A549 (cell line): ENCODE measurements at regions of chr2 and their contacts with region 1.

Region 1: DNA sequence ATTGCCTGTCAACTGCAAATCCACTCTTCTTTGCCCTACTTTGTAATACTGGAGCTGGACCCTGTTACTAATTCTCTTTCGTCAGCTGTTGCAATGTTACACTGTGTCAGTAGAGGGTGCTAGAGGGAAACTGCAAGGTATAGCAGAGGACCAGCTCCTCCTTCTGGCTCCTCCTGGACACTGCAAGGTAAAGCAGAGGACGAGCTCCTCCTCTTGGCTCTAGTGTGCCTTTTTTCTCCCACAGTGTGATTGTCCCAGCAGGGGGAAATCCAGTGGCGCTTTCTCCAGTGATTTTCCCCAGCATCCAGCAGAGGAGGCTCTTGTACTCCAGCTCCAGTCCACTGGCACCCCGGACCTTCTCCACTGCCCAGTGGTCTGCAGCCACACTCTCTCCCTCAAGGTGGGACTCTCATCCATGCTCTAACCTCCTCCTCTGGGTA is 95.6 kb downstream of the CAPN13 start:
- DNase-seq: peak; percentile 80 to 94
- ATAC-seq: peak; percentile 66 to 87
- H3K4me3 ChIP-seq: no peak overlapping the region
- H3K27ac ChIP-seq: no peak overlapping the region
- H3K4me1 ChIP-seq: no peaks in the 10 kb centered on the region
- CTCF ChIP-seq: peak; percentile 100
- EP300 ChIP-seq: no peak
- POLR2A ChIP-seq: no peak
- RAD21 ChIP-seq: peak; percentile 91 to 99

Region 2: DNA sequence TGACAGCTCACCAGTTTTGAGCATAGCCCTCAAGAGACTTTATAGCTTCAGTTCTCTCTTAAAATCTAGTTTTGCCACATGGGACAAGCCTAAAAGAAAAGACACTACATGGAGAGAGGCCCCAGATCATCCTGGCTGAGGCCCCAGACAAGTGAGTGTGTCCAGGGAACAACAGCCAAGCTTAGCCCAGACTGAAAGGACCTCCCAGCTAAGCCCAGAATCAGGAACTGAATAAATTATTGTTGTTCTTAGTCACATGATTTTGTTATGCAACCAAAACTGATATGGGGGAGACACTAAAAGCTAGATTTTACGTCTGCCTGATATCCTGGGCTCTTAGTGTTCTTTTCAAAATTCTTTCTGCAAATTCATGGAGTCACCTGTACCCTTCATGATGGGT is 509.7 kb before region 1 on chr2:
- CTCF ChIA-PET with region 1: interaction called, 430 read pairs
- POLR2A ChIA-PET with region 1: no interaction called
- DNase-seq: no peak
- ATAC-seq: no peak
- H3K4me3 ChIP-seq: no peak overlapping the region
- H3K27ac ChIP-seq: no peak overlapping the region
- H3K4me1 ChIP-seq: no peaks in the 10 kb centered on the region
- CTCF ChIP-seq: no peak
- EP300 ChIP-seq: no peak
- POLR2A ChIP-seq: no peak
- RAD21 ChIP-seq: no peak

Region 3: DNA sequence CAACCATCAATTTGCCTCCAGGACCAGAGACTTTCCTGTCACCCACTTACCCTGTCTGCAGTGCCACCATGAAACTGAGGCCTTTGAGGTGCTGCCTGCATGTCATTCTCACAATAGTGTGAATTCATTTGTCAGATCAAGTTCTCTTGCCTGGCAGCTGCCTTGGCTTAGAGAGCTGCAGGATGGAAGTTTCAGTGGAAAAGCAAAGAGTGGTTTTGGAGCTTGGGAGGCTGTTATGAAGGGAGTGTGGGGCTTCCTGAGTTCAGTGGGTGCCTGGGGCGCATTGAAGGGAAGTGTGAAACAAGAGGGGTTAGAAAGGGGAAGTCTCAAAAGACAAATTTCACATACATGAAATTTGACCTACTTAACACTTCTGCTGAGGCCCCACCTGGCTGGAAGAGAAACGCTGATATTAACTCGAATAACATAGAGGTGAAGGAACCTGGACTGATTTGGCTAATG is 488.2 kb before region 1 on chr2:
- CTCF ChIA-PET with region 1: interaction called, 39 read pairs
- POLR2A ChIA-PET with region 1: no interaction called
- DNase-seq: no peak
- ATAC-seq: no peak
- H3K4me3 ChIP-seq: no peak overlapping the region
- H3K27ac ChIP-seq: no peak overlapping the region
- H3K4me1 ChIP-seq: no peaks in the 10 kb centered on the region
- CTCF ChIP-seq: no peak
- EP300 ChIP-seq: no peak
- POLR2A ChIP-seq: no peak
- RAD21 ChIP-seq: no peak

Region 4: GRCh38 chr2:30686000-30686399 is 25.7 kb before region 1 on chr2:
- CTCF ChIA-PET with region 1: interaction called, 191 read pairs
- POLR2A ChIA-PET with region 1: no interaction called
- DNase-seq: peak in 1 of 2 experiments; percentile 55
- ATAC-seq: peak; percentile 58 to 80; a peak in 4 of 6 replicates
- H3K4me3 ChIP-seq: no peak overlapping the region
- H3K27ac ChIP-seq: no peak overlapping the region
- H3K4me1 ChIP-seq: no peaks in the 10 kb centered on the region
- CTCF ChIP-seq: 0 out of 3 replicates have a peak, but pooled peaks have one; percentile 12
- EP300 ChIP-seq: no peak
- POLR2A ChIP-seq: no peak
- RAD21 ChIP-seq: peak in 1 of 2 experiments; percentile 3; a peak in 1 of 5 replicates

Region 5: DNA sequence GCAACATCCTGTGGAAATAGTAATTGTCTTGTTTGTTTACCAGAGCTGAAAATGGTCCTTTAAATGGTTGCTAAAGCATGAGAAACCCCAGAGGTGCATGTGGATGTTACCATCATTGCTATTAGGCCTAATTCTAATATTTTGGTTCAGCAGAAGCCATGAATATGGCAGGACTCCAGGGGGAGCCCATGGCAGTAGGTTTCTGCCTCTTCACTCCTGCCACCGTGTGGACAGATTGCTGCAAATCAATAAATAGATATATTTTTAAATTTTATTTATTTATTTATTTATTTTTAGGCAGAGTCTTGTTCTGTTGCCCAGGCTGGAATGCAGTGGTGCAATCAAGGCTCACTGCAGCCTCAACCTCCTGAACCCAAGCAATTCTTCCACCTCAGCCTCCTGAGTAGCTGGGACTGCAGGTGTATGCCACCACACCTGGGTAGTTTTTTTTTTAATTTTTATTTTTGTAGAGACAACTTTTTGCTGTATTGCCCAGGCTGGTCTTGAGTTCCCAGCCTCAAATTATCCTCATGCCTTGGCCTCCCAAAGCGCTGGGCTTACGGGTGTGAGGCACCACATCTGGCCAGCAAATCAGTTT is 150.5 kb after region 1 on chr2:
- CTCF ChIA-PET with region 1: interaction called, 75 read pairs
- POLR2A ChIA-PET with region 1: no interaction called
- DNase-seq: peak; percentile 59 to 87
- ATAC-seq: peak; percentile 68 to 87; a peak in 5 of 6 replicates
- H3K4me3 ChIP-seq: no peak overlapping the region
- H3K27ac ChIP-seq: no peak overlapping the region
- H3K4me1 ChIP-seq: no peaks in the 10 kb centered on the region
- CTCF ChIP-seq: peak; percentile 96
- EP300 ChIP-seq: no peak
- POLR2A ChIP-seq: no peak
- RAD21 ChIP-seq: peak; percentile 73 to 80

Region 6: DNA sequence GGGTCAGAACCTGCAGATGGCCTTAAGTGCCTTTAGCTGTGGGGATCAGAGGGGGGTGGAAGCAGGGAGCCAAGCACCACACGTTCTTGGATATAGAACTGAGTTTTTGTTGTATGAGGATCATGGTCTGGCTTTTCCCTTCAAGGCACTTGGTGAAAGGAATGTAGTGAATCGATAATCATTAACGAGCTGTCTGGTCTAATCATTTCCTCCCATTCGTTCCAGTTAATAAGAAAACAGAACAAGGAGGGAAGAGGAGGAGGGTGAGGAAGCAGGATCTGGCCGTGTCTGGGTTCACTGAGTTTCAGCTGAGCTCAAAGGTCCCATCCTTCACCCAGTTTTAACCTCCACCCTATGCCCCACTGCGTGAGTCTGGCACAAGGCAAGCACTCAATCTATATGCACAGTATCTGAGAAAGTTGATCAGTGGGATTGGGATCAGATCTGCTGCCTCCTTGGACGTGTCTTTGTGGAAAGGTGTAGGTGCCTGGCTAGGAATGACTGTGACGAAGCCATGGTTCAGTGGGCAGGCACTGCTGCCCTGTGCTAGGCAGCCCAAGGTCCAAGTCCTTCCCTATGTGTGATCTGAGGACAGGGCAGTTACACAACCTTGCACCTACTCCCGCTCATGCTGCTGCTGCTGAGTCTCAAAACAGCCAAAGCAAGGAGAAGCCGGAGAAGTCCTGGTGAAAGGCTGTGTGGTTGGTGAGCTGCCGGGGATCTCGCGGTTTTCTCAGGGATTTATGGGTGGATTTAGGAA is 371.7 kb after region 1 on chr2:
- CTCF ChIA-PET with region 1: no interaction called
- POLR2A ChIA-PET with region 1: no interaction called
- DNase-seq: no peak
- ATAC-seq: peak; percentile 26 to 44; a peak in 3 of 6 replicates
- H3K4me3 ChIP-seq: no peak overlapping the region
- H3K27ac ChIP-seq: peak overlapping the region in 1 of 2 experiments; percentile 7; a peak in 3 of 6 replicates
- H3K4me1 ChIP-seq: peaks cover 46% of the 10 kb centered on the region
- CTCF ChIP-seq: no peak
- EP300 ChIP-seq: no peak
- POLR2A ChIP-seq: no peak
- RAD21 ChIP-seq: no peak

Region 7: GRCh38 chr2:31523871-31524492 is 812.3 kb after region 1 on chr2:
- CTCF ChIA-PET with region 1: interaction called, 27 read pairs
- POLR2A ChIA-PET with region 1: no interaction called
- DNase-seq: peak; percentile 33 to 62
- ATAC-seq: peak; percentile 72 to 93; a peak in 4 of 6 replicates
- H3K4me3 ChIP-seq: no peak overlapping the region
- H3K27ac ChIP-seq: no peak overlapping the region; a peak in 1 of 6 replicates
- H3K4me1 ChIP-seq: no peaks in the 10 kb centered on the region
- CTCF ChIP-seq: peak; percentile 85
- EP300 ChIP-seq: no peak
- POLR2A ChIP-seq: no peak
- RAD21 ChIP-seq: peak; percentile 62 to 75